T-cell (primary cell): ENCODE measurements at regions of chr22 and their contacts with region 1.

Region 1: DNA sequence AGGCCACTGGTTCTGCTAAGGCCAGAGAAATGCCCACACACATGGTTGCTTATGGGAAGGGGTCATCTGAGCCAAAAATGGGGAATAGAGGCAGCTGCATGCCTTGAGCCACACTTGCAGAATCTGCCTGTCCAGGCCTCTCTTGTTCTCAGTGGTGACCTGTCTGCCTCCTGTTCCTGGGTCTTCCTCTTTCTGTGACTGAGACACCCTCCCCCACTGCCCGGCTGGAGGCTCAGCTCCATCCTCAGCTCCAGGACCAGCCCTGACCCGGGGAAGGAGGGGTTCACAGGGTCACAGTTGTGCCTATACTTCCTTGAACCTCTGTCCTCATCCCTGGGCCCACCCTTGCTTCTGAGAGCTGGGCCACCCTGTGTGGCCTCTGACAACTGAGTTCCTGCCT is 52.3 kb downstream of the CSF2RB start:
- DNase-seq: no peak
- ATAC-seq: no peak
- H3K4me3 ChIP-seq: no peak overlapping the region
- H3K4me3 Mint-ChIP-seq: no peak overlapping the region
- H3K27ac ChIP-seq: no peak overlapping the region
- H3K27ac Mint-ChIP-seq: no peak overlapping the region
- H3K4me1 ChIP-seq: no peaks in the 10 kb centered on the region
- H3K4me1 Mint-ChIP-seq: no peaks in the 10 kb centered on the region
- H3K27me3 ChIP-seq: peaks cover 0 to 4% of the 10 kb centered on the region in 2 experiments
- H3K27me3 Mint-ChIP-seq: peaks cover 11 to 12% of the 10 kb centered on the region in 2 donors

Region 2: GRCh38 chr22:36868546-36869168 is 97.0 kb before region 1 on chr22:
- CTCF ChIA-PET with region 1: interaction called in 1 of 2 experiments, 10 read pairs
- POLR2A ChIA-PET with region 1: interaction called in 1 of 2 experiments, 4 read pairs
- DNase-seq: no peak
- ATAC-seq: no peak
- H3K4me3 ChIP-seq: no peak overlapping the region
- H3K4me3 Mint-ChIP-seq: no peak overlapping the region
- H3K27ac ChIP-seq: no peak overlapping the region
- H3K27ac Mint-ChIP-seq: no peak overlapping the region
- H3K4me1 ChIP-seq: peaks cover 0 to 5% of the 10 kb centered on the region in 2 experiments
- H3K4me1 Mint-ChIP-seq: peaks cover 2 to 10% (median 8%) of the 10 kb centered on the region in 3 donors
- H3K27me3 ChIP-seq: peaks cover 0 to 7% of the 10 kb centered on the region in 2 experiments
- H3K27me3 Mint-ChIP-seq: peaks cover 0 to 2% of the 10 kb centered on the region in 2 donors